ENCODE measurements at regions of chr17 and their contacts with region 1.

Region 1: GRCh38 chr17:29807520-29808351 is 122.3 kb downstream of the SSH2 start:
- DNase-seq: peak; percentile 31
- ATAC-seq: peak; percentile 83
- H3K4me3 ChIP-seq: no peak overlapping the region
- H3K27ac ChIP-seq: no peak overlapping the region
- H3K4me1 ChIP-seq: peaks cover 19% of the 10 kb centered on the region
- H3K27me3 ChIP-seq: no peaks in the 10 kb centered on the region
- CTCF ChIP-seq: peak; percentile 65 to 85 (median 69)
- EP300 ChIP-seq: no peak
- POLR2A ChIP-seq: no peak
- RAD21 ChIP-seq: peak; percentile 90

Region 2: GRCh38 chr17:29495011-29495410 is 312.7 kb before region 1 on chr17:
- CTCF ChIA-PET with region 1: no interaction called
- POLR2A ChIA-PET with region 1: no interaction called
- RAD21 ChIA-PET with region 1: no interaction called
- SMC1A ChIA-PET with region 1: no interaction called
- in situ Hi-C with region 1: no loop called
- intact Hi-C with region 1: no loop called
- DNase-seq: no peak
- ATAC-seq: no peak
- H3K4me3 ChIP-seq: no peak overlapping the region
- H3K27ac ChIP-seq: no peak overlapping the region
- H3K4me1 ChIP-seq: no peaks in the 10 kb centered on the region
- H3K27me3 ChIP-seq: no peaks in the 10 kb centered on the region
- CTCF ChIP-seq: no peak
- EP300 ChIP-seq: no peak
- POLR2A ChIP-seq: no peak
- RAD21 ChIP-seq: no peak

Region 3: GRCh38 chr17:29549177-29549923 is 258.4 kb before region 1 on chr17:
- CTCF ChIA-PET with region 1: no interaction called
- POLR2A ChIA-PET with region 1: no interaction called
- RAD21 ChIA-PET with region 1: no interaction called
- SMC1A ChIA-PET with region 1: no interaction called
- in situ Hi-C with region 1: no loop called
- intact Hi-C with region 1: no loop called
- DNase-seq: no peak
- ATAC-seq: peak; percentile 92
- H3K4me3 ChIP-seq: no peak overlapping the region
- H3K27ac ChIP-seq: no peak overlapping the region
- H3K4me1 ChIP-seq: peaks cover 9% of the 10 kb centered on the region; the same call in 1 of the 2 replicates
- H3K27me3 ChIP-seq: no peaks in the 10 kb centered on the region
- CTCF ChIP-seq: no peak
- EP300 ChIP-seq: no peak
- POLR2A ChIP-seq: no peak
- RAD21 ChIP-seq: no peak

Region 4: GRCh38 chr17:29820425-29820824 is 12.7 kb after region 1 on chr17:
- CTCF ChIA-PET with region 1: interaction called, 32 read pairs
- POLR2A ChIA-PET with region 1: interaction called, 3 read pairs
- RAD21 ChIA-PET with region 1: interaction called, 3 read pairs
- SMC1A ChIA-PET with region 1: interaction called, 11 read pairs
- in situ Hi-C with region 1: no loop called
- intact Hi-C with region 1: no loop called
- DNase-seq: no peak
- ATAC-seq: no peak
- H3K4me3 ChIP-seq: no peak overlapping the region
- H3K27ac ChIP-seq: no peak overlapping the region
- H3K4me1 ChIP-seq: no peaks in the 10 kb centered on the region
- H3K27me3 ChIP-seq: no peaks in the 10 kb centered on the region
- CTCF ChIP-seq: no peak
- EP300 ChIP-seq: no peak
- POLR2A ChIP-seq: no peak
- RAD21 ChIP-seq: no peak

Region 5: GRCh38 chr17:29855686-29856085 is 48.0 kb after region 1 on chr17:
- CTCF ChIA-PET with region 1: interaction called, 13 read pairs
- POLR2A ChIA-PET with region 1: no interaction called
- RAD21 ChIA-PET with region 1: interaction called, 4 read pairs
- SMC1A ChIA-PET with region 1: interaction called, 5 read pairs
- in situ Hi-C with region 1: no loop called
- intact Hi-C with region 1: loop called (anchors 2 kb)
- DNase-seq: no peak
- ATAC-seq: no peak
- H3K4me3 ChIP-seq: no peak overlapping the region
- H3K27ac ChIP-seq: no peak overlapping the region
- H3K4me1 ChIP-seq: no peaks in the 10 kb centered on the region; the same call in 1 of the 2 replicates
- H3K27me3 ChIP-seq: no peaks in the 10 kb centered on the region
- CTCF ChIP-seq: no peak
- EP300 ChIP-seq: no peak
- POLR2A ChIP-seq: no peak
- RAD21 ChIP-seq: no peak

Region 6: DNA sequence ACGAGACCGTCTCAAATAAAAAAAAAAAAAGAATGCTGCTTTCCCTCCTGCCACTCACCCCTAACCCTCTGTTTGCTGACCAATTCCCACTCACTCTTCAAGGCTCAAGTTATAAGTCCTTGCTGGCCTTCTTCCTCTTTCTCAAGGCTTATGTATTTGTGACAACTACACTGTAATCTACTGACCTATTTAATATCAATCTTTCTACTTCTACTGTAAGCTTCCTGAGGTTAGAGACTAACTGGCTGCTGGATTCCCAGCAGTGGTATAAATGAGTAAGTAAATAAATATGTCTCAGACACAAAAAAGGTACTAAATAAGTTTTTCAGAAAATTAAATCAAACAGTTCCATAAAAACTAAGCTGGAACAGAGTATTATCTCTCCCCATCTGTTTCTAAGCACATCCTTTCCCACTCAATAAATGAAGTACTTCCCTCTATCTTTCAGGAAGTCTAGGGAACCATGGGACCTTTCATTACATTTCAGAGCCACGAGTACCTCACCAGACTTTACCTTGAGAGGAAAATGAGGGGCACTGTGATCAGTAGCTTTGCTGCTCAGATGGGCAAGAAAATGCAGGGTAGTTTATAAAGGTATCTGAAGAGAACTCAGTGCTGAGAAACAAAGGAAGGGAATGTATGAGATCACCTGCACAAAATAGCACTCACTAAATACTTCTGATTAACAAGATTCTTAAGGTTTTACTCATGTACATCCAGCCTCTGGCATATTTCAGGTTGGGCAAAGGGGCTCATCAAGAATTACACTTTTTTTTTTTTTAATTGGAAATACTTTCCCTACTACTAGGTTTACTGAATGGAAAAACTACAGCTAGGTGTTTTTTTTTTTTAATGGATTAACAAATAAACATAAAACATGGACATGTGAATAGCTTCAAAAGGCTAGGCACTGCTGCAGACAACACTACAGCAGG is 111.5 kb after region 1 on chr17:
- CTCF ChIA-PET with region 1: interaction called, 17 read pairs
- POLR2A ChIA-PET with region 1: interaction called, 7 read pairs
- RAD21 ChIA-PET with region 1: interaction called, 5 read pairs
- SMC1A ChIA-PET with region 1: interaction called, 33 read pairs
- in situ Hi-C with region 1: no loop called
- intact Hi-C with region 1: no loop called
- DNase-seq: no peak
- ATAC-seq: peak; percentile 53
- H3K4me3 ChIP-seq: no peak overlapping the region
- H3K27ac ChIP-seq: no peak overlapping the region
- H3K4me1 ChIP-seq: peaks cover 10% of the 10 kb centered on the region; the same call in 1 of the 2 replicates
- H3K27me3 ChIP-seq: no peaks in the 10 kb centered on the region
- CTCF ChIP-seq: no peak
- EP300 ChIP-seq: no peak
- POLR2A ChIP-seq: no peak
- RAD21 ChIP-seq: no peak

Region 7: GRCh38 chr17:30021708-30022317 is 214.1 kb after region 1 on chr17:
- CTCF ChIA-PET with region 1: interaction called, 38 read pairs
- POLR2A ChIA-PET with region 1: no interaction called
- RAD21 ChIA-PET with region 1: interaction called, 14 read pairs
- SMC1A ChIA-PET with region 1: interaction called, 53 read pairs
- in situ Hi-C with region 1: loop called (anchors 5 kb)
- intact Hi-C with region 1: loop called (anchors 1 kb)
- DNase-seq: no peak
- ATAC-seq: peak; percentile 77
- H3K4me3 ChIP-seq: no peak overlapping the region
- H3K27ac ChIP-seq: no peak overlapping the region
- H3K4me1 ChIP-seq: no peaks in the 10 kb centered on the region
- H3K27me3 ChIP-seq: no peaks in the 10 kb centered on the region
- CTCF ChIP-seq: peak; percentile 71 to 75 (median 75)
- EP300 ChIP-seq: no peak
- POLR2A ChIP-seq: no peak
- RAD21 ChIP-seq: peak; percentile 82

Region 8: DNA sequence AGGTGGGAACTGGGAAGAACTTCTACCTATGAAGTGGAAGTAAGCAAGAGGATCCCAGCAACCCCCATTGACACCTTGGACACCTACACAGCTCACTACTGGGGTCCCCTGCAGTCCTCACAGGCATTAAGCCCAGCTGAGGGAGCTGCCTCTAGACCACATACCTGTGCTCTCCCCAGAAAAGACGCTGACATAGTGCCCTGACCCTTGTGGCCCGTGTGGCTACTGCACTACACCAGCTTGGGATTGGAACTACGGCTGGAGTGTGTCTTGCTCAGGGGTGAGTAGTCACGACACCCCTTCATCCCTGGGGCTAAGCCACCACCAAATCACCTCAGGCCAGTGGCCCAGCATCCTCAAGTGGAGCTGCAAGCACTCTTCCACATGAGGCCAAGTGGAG is 254.6 kb after region 1 on chr17:
- CTCF ChIA-PET with region 1: no interaction called
- POLR2A ChIA-PET with region 1: no interaction called
- RAD21 ChIA-PET with region 1: no interaction called
- SMC1A ChIA-PET with region 1: no interaction called
- in situ Hi-C with region 1: no loop called
- intact Hi-C with region 1: no loop called
- DNase-seq: no peak
- ATAC-seq: no peak
- H3K4me3 ChIP-seq: no peak overlapping the region
- H3K27ac ChIP-seq: no peak overlapping the region
- H3K4me1 ChIP-seq: no peaks in the 10 kb centered on the region
- H3K27me3 ChIP-seq: no peaks in the 10 kb centered on the region; a peak in 1 of 4 replicates
- CTCF ChIP-seq: no peak
- EP300 ChIP-seq: no peak
- POLR2A ChIP-seq: no peak
- RAD21 ChIP-seq: no peak